Activated CD4-positive, alpha-beta memory T cell treated with anti-CD3 and anti-CD28 coated beads for 36 hours (primary cell): ENCODE measurements at regions of chr2 and their contacts with region 1.

Region 1: DNA sequence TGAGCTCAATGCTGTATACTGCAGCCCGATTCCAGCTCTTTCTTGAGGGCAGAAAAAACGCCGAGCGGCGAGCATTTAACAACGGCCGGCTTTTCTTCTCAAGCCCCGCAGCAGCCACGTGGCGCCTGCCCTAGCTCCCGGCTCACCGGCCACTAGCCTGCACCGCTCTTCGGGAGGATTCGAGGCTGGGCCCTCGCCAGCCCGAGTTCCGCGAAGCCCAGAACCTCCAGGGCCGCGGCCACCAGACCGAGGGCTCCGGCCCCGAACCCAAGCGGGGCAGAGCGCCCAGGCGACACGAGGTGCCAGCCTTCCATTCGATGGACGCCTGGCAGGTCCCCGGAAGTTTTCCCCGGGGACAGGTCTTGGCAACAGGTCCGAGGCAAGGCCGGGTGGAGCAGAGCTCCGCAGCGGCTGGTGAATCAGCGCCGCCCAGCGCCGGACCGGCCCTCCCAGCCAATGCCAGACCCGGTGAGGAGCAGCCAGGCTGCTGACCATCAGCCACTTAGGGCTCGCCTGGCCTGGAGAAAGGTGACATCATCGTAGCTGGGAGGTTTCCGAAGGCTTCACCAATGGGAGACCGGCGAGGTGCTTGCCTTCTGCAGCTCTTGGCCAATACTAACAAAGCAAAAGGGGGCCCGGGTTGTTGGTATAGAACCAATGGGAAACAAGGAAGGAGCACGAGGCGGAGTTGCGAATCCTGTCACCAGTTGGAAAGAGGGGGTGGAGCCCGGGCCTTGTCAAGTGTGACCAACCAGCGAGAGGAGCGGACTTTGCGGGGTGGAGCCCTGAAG is 544 bp upstream of the MXD1 start:
- DNase-seq: peak; percentile 100
- H3K4me3 Mint-ChIP-seq: peak overlapping the region; percentile 82
- H3K27ac Mint-ChIP-seq: peak overlapping the region; percentile 89
- H3K4me1 Mint-ChIP-seq: peaks cover 40% of the 10 kb centered on the region
- H3K27me3 Mint-ChIP-seq: no peaks in the 10 kb centered on the region

Region 2: DNA sequence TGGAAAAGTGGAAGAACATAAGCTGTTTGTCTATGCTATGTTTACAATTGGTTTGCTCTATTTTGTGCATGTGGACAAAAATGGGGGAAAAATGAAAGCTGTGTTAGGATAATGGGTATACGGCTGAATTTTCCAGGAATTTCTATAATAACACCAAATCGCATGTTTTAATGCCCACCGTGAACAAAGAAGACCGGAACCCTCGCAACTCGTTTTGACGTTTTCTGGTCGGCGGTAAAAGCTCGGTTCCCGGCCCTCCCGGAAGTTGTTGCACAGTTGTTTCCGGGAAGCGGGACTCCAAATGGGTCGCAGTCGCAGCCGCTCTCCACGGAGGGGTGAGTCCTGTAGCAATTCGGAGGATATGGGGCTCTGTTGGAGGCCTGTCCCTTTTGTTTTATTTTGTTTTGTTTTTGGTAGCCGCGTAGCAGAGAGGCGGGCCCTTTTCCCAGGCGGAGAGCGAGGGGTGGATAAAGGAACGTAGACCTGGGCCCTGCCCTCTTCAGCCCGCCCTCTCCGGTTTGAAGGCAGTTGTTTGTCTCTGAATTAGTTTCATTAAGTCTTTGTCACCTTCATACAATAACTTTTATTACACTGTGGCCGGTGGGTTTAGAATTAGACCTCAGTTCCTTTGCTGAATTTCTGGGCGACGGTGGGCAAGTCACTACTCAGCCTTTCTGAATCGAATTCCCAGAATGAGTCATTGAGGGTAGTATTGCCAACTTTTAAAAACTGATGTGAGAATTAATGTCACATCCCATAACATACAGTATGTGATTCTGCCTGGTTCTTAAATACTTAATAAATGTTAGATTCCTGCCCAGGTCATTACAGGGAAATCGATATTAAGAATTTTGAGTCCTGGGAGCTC is 20.4 kb before region 1 on chr2 and contains the start of gene SNRNP27:
- CTCF ChIA-PET with region 1: interaction called, 5 read pairs
- POLR2A ChIA-PET with region 1: interaction called, 6 read pairs
- intact Hi-C with region 1: loop called (anchors 1 kb)
- DNase-seq: peak; percentile 87
- H3K4me3 Mint-ChIP-seq: peak within 1 kb of the TSS; percentile 99
- H3K27ac Mint-ChIP-seq: peak within 1 kb of the TSS; percentile 96
- H3K4me1 Mint-ChIP-seq: peaks cover 46% of the 10 kb centered on the region
- H3K27me3 Mint-ChIP-seq: no peaks in the 10 kb centered on the region
- total RNA-seq, gene SNRNP27: 67.5 to 70.4 TPM

Region 3: GRCh38 chr2:69957965-69958364 is 43.6 kb after region 1 on chr2:
- CTCF ChIA-PET with region 1: no interaction called
- POLR2A ChIA-PET with region 1: no interaction called
- intact Hi-C with region 1: no loop called
- DNase-seq: no peak
- H3K4me3 Mint-ChIP-seq: no peak overlapping the region
- H3K27ac Mint-ChIP-seq: no peak overlapping the region
- H3K4me1 Mint-ChIP-seq: no peaks in the 10 kb centered on the region
- H3K27me3 Mint-ChIP-seq: peaks cover 2% of the 10 kb centered on the region

Region 4: DNA sequence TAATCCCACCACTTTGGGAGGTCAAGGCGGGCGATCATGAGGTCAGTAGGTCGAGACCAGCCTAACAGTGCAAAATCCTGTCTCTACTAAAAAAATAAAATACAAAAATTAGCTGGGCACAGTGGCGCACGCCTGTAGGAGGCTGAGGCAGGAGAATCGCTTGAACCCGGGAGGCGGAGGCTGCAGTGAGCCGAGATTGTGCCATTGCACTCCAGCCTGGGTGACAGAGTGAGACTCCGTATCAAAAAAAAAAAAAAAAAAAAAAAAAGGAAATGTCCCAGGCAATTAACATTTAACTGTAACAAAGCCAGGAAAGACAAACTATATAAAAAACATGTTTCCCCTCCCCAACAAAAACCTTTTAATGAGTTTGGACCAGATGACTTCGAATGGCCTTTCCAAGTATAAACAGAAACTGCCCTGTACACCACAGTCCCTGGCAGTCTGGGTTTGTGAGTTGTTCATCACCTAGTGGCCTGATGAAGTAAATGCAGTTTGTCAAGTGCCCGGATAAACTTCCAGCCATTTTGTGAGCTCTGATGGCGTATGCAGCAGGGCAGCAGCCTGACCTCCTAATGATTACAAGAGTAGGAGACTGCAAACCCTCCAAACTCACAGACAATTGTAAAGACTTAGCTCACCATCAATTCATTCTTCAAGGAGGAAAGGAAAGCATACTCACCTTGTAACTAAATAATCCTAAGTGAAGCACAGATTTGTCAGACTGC is 156.3 kb after region 1 on chr2:
- CTCF ChIA-PET with region 1: interaction called, 119 read pairs
- POLR2A ChIA-PET with region 1: interaction called, 42 read pairs
- intact Hi-C with region 1: loop called (anchors 1 kb)
- DNase-seq: peak; percentile 72
- H3K4me3 Mint-ChIP-seq: peak overlapping the region; percentile 35
- H3K27ac Mint-ChIP-seq: peak overlapping the region; percentile 98
- H3K4me1 Mint-ChIP-seq: peaks cover 46% of the 10 kb centered on the region
- H3K27me3 Mint-ChIP-seq: no peaks in the 10 kb centered on the region

Region 5: GRCh38 chr2:70124983-70125480 is 210.7 kb after region 1 on chr2:
- CTCF ChIA-PET with region 1: interaction called, 9 read pairs
- POLR2A ChIA-PET with region 1: interaction called, 20 read pairs
- intact Hi-C with region 1: no loop called
- DNase-seq: peak; percentile 67
- H3K4me3 Mint-ChIP-seq: peak overlapping the region; percentile 92
- H3K27ac Mint-ChIP-seq: peak overlapping the region; percentile 98
- H3K4me1 Mint-ChIP-seq: peaks cover 62% of the 10 kb centered on the region
- H3K27me3 Mint-ChIP-seq: no peaks in the 10 kb centered on the region

Region 6: GRCh38 chr2:70190418-70191243 is 276.3 kb after region 1 on chr2 and contains the start of gene C2orf42:
- CTCF ChIA-PET with region 1: interaction called, 5 read pairs
- POLR2A ChIA-PET with region 1: interaction called, 26 read pairs
- intact Hi-C with region 1: loop called (anchors 1 kb)
- DNase-seq: peak; percentile 98
- H3K4me3 Mint-ChIP-seq: peak within 1 kb of the TSS; percentile 97
- H3K27ac Mint-ChIP-seq: peak within 1 kb of the TSS; percentile 99
- H3K4me1 Mint-ChIP-seq: peaks cover 20% of the 10 kb centered on the region
- H3K27me3 Mint-ChIP-seq: peaks cover 1% of the 10 kb centered on the region
- total RNA-seq, gene C2orf42: 23.5 to 23.9 TPM